Calu3 (cell line): ENCODE measurements at regions of chr2 and their contacts with region 1.

Region 1: GRCh38 chr2:186460465-186460864 is 25.6 kb upstream of the ZC3H15 start:
- DNase-seq: peak; percentile 9
- H3K4me3 Mint-ChIP-seq: no peak overlapping the region
- H3K27ac Mint-ChIP-seq: no peak overlapping the region
- H3K4me1 Mint-ChIP-seq: peaks cover 9% of the 10 kb centered on the region
- H3K27me3 Mint-ChIP-seq: no peaks in the 10 kb centered on the region
- CTCF ChIP-seq: peak; percentile 22

Region 2: DNA sequence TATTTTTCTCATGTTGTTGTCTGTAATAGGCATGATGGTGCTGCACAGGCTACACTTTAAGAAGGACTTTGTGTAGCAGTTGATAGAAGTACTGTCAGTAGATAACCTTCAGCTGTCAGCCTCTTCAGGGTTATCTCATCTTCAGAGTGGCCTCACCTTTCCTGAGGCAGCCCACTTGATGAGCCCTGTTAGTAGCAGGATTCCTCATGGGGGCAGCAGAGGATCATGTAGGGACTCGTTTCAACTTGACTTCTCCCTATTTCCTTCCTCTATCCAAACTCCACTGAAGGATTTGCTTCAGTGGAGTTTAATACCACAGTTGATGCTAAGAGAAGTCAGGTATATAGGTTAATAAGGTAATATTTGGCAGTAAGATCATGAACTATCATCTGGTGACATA is 1252.2 kb before region 1 on chr2:
- CTCF ChIA-PET with region 1: no interaction called
- intact Hi-C with region 1: loop called (anchors 2 kb)
- DNase-seq: peak; percentile 73
- H3K4me3 Mint-ChIP-seq: no peak overlapping the region
- H3K27ac Mint-ChIP-seq: no peak overlapping the region
- H3K4me1 Mint-ChIP-seq: peaks cover 9% of the 10 kb centered on the region
- H3K27me3 Mint-ChIP-seq: no peaks in the 10 kb centered on the region
- CTCF ChIP-seq: peak; percentile 60

Region 3: DNA sequence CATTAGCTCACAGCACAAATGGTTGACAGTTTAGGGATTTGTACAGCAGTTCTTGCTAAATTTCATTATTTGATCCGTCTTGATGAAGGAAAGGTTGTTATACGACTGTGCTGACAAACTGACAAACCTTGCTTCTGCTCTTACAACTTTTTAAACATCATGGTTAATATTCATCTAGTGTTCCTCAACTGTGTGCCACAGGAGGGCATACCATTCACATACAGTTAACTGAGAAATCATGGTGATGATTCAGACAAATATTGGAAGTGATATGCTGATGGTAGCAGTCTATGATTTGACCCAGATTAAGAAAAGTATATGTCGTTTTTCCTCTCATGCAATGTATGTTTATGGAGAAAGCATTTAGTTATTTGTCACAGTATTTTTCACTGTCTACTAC is 851.7 kb before region 1 on chr2:
- CTCF ChIA-PET with region 1: no interaction called
- intact Hi-C with region 1: loop called (anchors 2 kb)
- DNase-seq: peak; percentile 28
- H3K4me3 Mint-ChIP-seq: peak overlapping the region; percentile 10
- H3K27ac Mint-ChIP-seq: no peak overlapping the region
- H3K4me1 Mint-ChIP-seq: no peaks in the 10 kb centered on the region
- H3K27me3 Mint-ChIP-seq: no peaks in the 10 kb centered on the region
- CTCF ChIP-seq: no peak

Region 4: GRCh38 chr2:185746531-185746881 is 714.0 kb before region 1 on chr2:
- CTCF ChIA-PET with region 1: no interaction called
- intact Hi-C with region 1: loop called (anchors 2 kb)
- DNase-seq: no peak
- H3K4me3 Mint-ChIP-seq: peak overlapping the region; percentile 30
- H3K27ac Mint-ChIP-seq: peak overlapping the region; percentile 12
- H3K4me1 Mint-ChIP-seq: peaks cover 23% of the 10 kb centered on the region
- H3K27me3 Mint-ChIP-seq: no peaks in the 10 kb centered on the region
- CTCF ChIP-seq: no peak

Region 5: DNA sequence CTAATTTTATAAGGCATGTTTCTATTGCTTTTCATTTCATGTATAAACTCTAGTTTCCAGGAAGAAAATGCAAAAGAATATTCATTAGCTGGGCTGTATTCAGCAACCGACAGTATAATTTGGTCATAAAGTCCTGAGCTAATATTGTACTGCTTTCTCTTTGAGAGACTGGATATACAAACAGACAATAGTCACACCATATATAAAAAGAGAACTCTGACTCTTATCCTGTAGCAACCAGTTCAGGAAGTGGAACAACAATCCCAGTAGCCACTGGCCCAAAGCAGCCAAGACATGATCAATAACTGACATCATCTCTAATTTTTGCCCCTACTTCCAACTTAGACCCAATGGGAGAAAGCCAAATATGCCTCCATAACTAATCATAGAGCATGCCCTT is 561.1 kb before region 1 on chr2:
- CTCF ChIA-PET with region 1: no interaction called
- intact Hi-C with region 1: no loop called
- DNase-seq: no peak
- H3K4me3 Mint-ChIP-seq: no peak overlapping the region
- H3K27ac Mint-ChIP-seq: no peak overlapping the region
- H3K4me1 Mint-ChIP-seq: no peaks in the 10 kb centered on the region
- H3K27me3 Mint-ChIP-seq: no peaks in the 10 kb centered on the region
- CTCF ChIP-seq: no peak

Region 6: DNA sequence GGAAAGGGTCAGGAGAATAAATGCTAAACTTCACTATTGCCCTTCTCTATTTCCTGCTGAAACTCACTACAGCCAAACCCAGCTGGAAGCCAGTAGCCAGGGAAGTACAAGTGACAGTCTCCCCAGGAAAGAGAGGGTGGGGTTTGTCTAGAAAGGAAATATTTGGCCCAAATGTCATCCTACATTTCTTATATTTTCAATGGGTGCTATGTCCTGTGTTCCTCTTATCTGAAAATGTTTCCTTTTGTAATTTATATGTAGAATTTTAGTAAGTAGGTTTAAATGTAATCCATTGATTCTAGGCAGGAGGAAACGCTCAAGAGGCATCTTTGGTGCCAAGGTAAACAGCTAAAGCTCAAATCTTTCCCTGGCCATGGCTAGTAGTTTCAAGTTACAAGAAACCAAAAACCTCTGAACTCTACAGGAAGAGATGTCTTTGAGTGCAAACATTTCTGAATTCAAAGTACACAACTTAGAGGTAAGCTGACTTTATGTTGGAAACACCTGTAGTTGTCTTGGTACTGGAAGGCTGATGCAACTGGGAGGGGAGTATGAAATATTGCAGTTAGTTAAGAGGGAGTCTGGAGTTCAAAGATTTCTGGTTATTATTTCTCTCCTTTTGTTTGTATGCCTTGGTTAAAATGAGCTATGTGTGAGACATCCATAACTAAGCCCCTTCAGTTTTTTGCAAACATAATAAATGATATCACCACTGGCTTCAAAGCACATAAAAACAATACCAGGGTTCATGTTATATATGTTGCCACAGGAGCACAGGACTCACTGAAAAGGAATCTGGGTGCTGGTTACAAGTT is 330.5 kb before region 1 on chr2:
- CTCF ChIA-PET with region 1: no interaction called
- intact Hi-C with region 1: loop called (anchors 1 kb)
- DNase-seq: peak; percentile 46
- H3K4me3 Mint-ChIP-seq: peak overlapping the region; percentile 26
- H3K27ac Mint-ChIP-seq: peak overlapping the region; percentile 93
- H3K4me1 Mint-ChIP-seq: peaks cover 51% of the 10 kb centered on the region
- H3K27me3 Mint-ChIP-seq: no peaks in the 10 kb centered on the region
- CTCF ChIP-seq: no peak

Region 7: DNA sequence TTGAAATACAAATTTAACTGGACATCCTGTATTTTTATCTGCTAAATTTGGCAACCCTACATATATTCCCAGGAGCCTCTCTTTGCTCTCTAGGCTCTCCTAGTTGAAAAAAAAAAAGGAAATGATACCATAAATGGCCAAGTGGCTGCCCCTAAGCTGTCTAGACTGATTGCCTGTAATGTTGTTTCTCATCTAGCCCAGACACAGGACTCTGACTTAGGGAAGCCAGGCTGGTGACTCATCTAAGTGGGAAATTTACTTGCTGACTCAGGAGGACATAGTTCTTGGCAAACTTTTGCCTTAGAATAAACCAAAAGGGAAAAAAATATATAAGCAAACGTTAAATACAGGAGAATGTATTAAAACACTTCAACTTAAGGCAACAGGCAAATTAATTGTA is 114.8 kb after region 1 on chr2:
- CTCF ChIA-PET with region 1: no interaction called
- intact Hi-C with region 1: no loop called
- DNase-seq: peak; percentile 67
- H3K4me3 Mint-ChIP-seq: no peak overlapping the region
- H3K27ac Mint-ChIP-seq: peak overlapping the region; percentile 67
- H3K4me1 Mint-ChIP-seq: peaks cover 32% of the 10 kb centered on the region
- H3K27me3 Mint-ChIP-seq: no peaks in the 10 kb centered on the region
- CTCF ChIP-seq: no peak